Endothelial cell of umbilical vein (primary cell): ENCODE measurements at regions of chrX and their contacts with region 1.

Region 1: GRCh38 chrX:11967986-11968859 is 170.1 kb upstream of the FRMPD4 start:
- DNase-seq: no peak
- H3K4me3 ChIP-seq: no peak overlapping the region
- H3K27ac ChIP-seq: no peak overlapping the region
- H3K4me1 ChIP-seq: peaks cover 39% of the 10 kb centered on the region
- H3K27me3 ChIP-seq: no peaks in the 10 kb centered on the region
- CTCF ChIP-seq: no peak
- POLR2A ChIP-seq: no peak

Region 2: DNA sequence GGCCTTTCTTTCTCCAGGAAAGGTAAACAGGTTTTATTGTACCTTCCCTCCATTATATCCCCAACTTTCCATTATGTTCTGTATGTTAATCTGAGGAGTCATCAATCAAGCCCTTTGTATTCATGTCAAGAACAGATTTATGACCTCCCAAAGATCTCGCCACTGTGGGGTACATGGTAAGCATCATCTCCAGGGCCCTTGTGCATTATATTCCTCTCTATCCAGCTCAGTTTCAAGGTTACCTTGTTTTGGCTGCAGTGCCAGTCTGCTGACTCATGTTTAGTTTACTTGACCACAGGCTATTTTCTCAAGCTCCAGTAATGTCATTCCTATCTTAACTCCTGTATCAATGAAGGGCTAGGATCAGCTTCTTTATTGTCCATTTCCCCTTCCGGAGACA is 45.0 kb after region 1 on chrX:
- CTCF ChIA-PET with region 1: interaction called, 4 read pairs
- POLR2A ChIA-PET with region 1: no interaction called
- dilution Hi-C with region 1: no loop called
- intact Hi-C with region 1: loop called (anchors 5 kb)
- DNase-seq: peak; percentile 27
- H3K4me3 ChIP-seq: no peak overlapping the region
- H3K27ac ChIP-seq: no peak overlapping the region
- H3K4me1 ChIP-seq: peaks cover 3% of the 10 kb centered on the region
- H3K27me3 ChIP-seq: no peaks in the 10 kb centered on the region
- CTCF ChIP-seq: no peak
- POLR2A ChIP-seq: no peak